ENCODE measurements at regions of chrX and their contacts with region 1.

Region 1: DNA sequence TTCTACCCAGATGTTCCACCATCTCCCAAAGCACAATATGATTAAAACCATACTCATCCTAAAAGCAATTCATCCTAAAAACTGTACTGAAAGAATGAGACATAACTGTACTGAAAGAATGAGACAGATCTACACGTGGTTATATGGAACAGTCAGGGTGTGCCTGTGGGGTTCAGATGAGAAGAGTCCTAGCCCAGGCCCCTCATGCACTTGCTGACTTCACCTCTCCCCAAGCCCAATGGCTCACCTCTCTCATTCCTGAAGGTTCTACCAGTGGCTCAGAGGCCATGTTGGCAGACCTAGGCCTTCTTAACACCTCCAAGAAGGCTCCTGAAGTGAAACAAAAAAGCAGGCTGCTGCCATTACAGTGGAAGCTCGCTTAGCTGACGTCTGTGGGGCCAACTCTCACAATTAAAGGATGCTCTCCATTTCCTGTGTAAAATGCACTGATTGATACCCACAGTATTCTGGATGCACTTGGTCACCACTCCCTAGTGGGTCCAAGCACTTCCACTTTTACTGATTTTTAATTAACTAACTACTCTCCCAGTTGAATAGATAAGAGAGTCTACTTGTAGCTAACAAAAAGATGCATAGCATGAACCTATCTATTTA is 3.8 kb downstream of the PLAC1 start:
- DNase-seq: peak; percentile 60
- H3K4me3 Mint-ChIP-seq: no peak overlapping the region
- H3K27ac Mint-ChIP-seq: no peak overlapping the region
- H3K4me1 Mint-ChIP-seq: peaks cover 13% of the 10 kb centered on the region
- H3K27me3 Mint-ChIP-seq: peaks cover 16% of the 10 kb centered on the region

Region 2: GRCh38 chrX:134013092-134013497 is 641.4 kb before region 1 on chrX:
- CTCF ChIA-PET with region 1: no interaction called
- intact Hi-C with region 1: loop called (anchors 5 kb)
- DNase-seq: peak; percentile 6
- H3K4me3 Mint-ChIP-seq: no peak overlapping the region
- H3K27ac Mint-ChIP-seq: no peak overlapping the region
- H3K4me1 Mint-ChIP-seq: peaks cover 12% of the 10 kb centered on the region
- H3K27me3 Mint-ChIP-seq: no peaks in the 10 kb centered on the region

Region 3: GRCh38 chrX:134603806-134604700 is 50.5 kb before region 1 on chrX:
- CTCF ChIA-PET with region 1: interaction called, 4 read pairs
- intact Hi-C with region 1: loop called (anchors 1 kb)
- DNase-seq: peak; percentile 6
- H3K4me3 Mint-ChIP-seq: no peak overlapping the region
- H3K27ac Mint-ChIP-seq: peak overlapping the region; percentile 31
- H3K4me1 Mint-ChIP-seq: peaks cover 16% of the 10 kb centered on the region
- H3K27me3 Mint-ChIP-seq: peaks cover 11% of the 10 kb centered on the region

Region 4: DNA sequence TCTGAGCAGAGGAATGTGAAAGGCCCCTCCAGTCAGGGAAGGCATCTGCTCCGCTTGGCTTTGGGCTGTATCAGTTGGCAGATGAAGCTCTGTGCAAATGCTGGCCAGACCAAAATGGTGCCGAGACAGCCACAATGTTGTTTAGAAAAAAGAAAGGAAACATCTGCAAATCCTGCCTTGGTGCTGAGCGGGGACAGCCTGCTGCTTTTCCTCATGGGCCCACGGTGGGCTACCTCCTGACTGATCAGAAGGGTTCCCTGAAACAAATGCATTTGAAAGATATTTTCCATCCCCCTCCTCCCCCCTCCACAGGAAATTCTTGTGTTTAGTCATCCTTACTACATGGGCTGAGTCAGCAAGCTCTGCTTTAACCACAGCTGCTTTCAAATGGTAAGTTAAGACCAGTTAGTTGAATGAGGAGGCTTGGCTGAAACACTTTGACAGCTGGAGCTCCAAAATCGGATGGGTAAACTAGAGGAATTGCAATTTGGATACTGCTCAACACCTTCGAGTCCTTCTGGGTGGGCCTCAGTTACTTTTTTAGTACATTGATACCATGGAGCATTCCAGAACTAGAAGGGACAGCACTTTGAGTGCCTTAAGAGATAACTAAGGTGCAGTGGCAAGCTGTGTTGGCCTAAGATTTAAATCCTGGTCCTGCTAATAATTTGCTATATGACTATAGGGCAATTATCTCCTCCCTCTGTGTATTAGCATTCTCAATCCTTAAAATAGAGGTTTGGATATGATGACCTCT is 32.3 kb before region 1 on chrX:
- CTCF ChIA-PET with region 1: no interaction called
- intact Hi-C with region 1: loop called (anchors 1 kb)
- DNase-seq: peak; percentile 46
- H3K4me3 Mint-ChIP-seq: no peak overlapping the region
- H3K27ac Mint-ChIP-seq: no peak overlapping the region
- H3K4me1 Mint-ChIP-seq: peaks cover 19% of the 10 kb centered on the region
- H3K27me3 Mint-ChIP-seq: peaks cover 35% of the 10 kb centered on the region

Region 5: DNA sequence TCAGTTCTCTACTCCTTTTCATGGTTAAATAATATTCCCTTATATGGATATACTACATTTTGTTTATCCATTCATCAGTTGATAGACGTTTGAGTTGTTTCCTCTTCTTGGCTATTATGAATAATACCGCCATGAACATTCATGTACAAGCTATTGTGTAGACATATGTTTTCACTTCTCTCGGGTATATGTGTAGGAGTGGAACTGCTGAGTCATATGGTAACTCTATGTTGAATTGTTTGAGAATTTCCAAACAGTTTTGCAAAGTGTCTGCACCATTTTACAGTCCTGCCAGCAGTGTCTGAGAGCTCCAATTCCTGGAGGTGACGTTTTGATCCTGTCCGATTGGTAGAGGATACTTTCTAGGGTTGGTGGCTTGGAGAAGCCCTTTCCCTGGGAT is 19.8 kb before region 1 on chrX:
- CTCF ChIA-PET with region 1: no interaction called
- intact Hi-C with region 1: loop called (anchors 2 kb)
- DNase-seq: no peak
- H3K4me3 Mint-ChIP-seq: no peak overlapping the region
- H3K27ac Mint-ChIP-seq: no peak overlapping the region
- H3K4me1 Mint-ChIP-seq: peaks cover 5% of the 10 kb centered on the region
- H3K27me3 Mint-ChIP-seq: peaks cover 13% of the 10 kb centered on the region

Region 6: GRCh38 chrX:134718105-134718965 is 63.8 kb after region 1 on chrX:
- CTCF ChIA-PET with region 1: no interaction called
- intact Hi-C with region 1: loop called (anchors 1 kb)
- DNase-seq: no peak
- H3K4me3 Mint-ChIP-seq: no peak overlapping the region
- H3K27ac Mint-ChIP-seq: no peak overlapping the region
- H3K4me1 Mint-ChIP-seq: peaks cover 18% of the 10 kb centered on the region
- H3K27me3 Mint-ChIP-seq: no peaks in the 10 kb centered on the region